Esophagus muscularis mucosa (tissue), 4 donors: ENCODE measurements at regions of chr21 and their contacts with region 1.

Region 1: GRCh38 chr21:42973991-42974831 is at the start of gene PKNOX1:
- DNase-seq: peak; percentile 99
- H3K4me3 ChIP-seq: peak within 1 kb of the TSS; percentile 65 to 99 (median 84)
- H3K27ac ChIP-seq: peak within 1 kb of the TSS; percentile 95 to 100 (median 98)
- H3K4me1 ChIP-seq: peaks cover 15 to 29% (median 22%) of the 10 kb centered on the region in 4 donors
- H3K27me3 ChIP-seq: no peaks in the 10 kb centered on the region
- CTCF ChIP-seq: peak in 1 of 3 experiments; percentile 15
- EP300 ChIP-seq: no peak
- POLR2A ChIP-seq: no peak
- total RNA-seq, gene PKNOX1: 10.3 to 18.7 (median 14.3) TPM

Region 2: GRCh38 chr21:41641821-41642701 is 1332.2 kb before region 1 on chr21:
- intact Hi-C with region 1: no loop called
- DNase-seq: no peak
- H3K4me3 ChIP-seq: no peak overlapping the region
- H3K27ac ChIP-seq: peak overlapping the region; percentile 55 to 77 (median 67)
- H3K4me1 ChIP-seq: peaks cover 0 to 16% (median 7%) of the 10 kb centered on the region in 4 donors
- H3K27me3 ChIP-seq: peaks cover 0 to 19% (median 0%) of the 10 kb centered on the region in 4 donors
- CTCF ChIP-seq: no peak
- EP300 ChIP-seq: no peak
- POLR2A ChIP-seq: no peak

Region 3: GRCh38 chr21:42878993-42879787 is 95.0 kb before region 1 on chr21 and contains the start of gene WDR4:
- intact Hi-C with region 1: no loop called
- DNase-seq: peak; percentile 99
- H3K4me3 ChIP-seq: peak within 1 kb of the TSS; percentile 73 to 98 (median 92)
- H3K27ac ChIP-seq: peak within 1 kb of the TSS; percentile 74 to 98 (median 88)
- H3K4me1 ChIP-seq: peaks cover 11 to 25% (median 22%) of the 10 kb centered on the region in 4 donors
- H3K27me3 ChIP-seq: no peaks in the 10 kb centered on the region
- CTCF ChIP-seq: peak in 1 of 3 experiments; percentile 23
- EP300 ChIP-seq: no peak
- POLR2A ChIP-seq: peak; percentile 13
- total RNA-seq, gene WDR4: 5.8 to 10.1 (median 7.0) TPM

Region 4: DNA sequence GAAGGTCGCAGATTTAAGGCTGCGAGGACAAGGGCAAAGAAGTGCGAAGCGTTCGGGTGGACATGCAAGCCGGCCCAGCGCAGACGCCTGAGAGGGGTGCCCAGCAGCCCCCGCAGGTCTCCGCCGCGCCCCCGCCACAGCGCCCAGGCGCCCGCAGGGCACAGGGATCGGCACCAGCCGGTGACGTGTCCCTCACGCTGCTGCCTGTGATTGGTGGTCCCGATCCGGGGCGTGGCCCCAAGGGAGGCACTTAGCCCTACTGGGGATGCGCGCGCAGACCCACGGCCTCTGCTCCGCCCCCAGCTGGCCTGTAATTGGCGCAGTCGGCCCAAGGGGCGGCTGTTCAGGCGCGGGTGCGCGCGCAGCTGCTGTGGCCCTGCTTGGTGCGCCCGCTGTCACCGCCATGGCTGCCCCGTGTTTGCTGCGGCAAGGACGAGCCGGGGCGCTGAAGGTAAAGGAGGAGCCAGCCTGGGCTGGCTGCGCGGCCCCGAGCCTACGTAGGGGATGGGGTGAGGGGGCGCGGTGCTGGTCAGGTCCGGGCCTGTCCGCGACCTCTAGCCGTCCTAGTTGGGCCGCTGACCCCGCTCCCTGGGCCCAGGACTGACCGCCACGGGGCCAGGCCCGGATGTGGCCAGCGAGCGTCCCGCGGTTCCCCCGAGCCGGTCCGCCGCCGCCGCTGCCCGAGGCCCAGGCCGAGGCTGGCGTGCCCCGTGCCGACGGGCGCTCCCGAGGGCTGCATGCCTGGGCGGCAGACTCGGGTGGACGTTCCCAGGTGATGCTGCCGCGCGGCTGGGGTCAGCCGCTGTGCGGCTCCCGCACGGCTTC is 81.1 kb before region 1 on chr21 and contains the start of gene NDUFV3:
- intact Hi-C with region 1: loop called (anchors 10 kb)
- DNase-seq: peak; percentile 100
- H3K4me3 ChIP-seq: peak within 1 kb of the TSS; percentile 72 to 93 (median 84)
- H3K27ac ChIP-seq: peak within 1 kb of the TSS; percentile 93 to 99 (median 96)
- H3K4me1 ChIP-seq: peaks cover 7 to 32% (median 20%) of the 10 kb centered on the region in 4 donors
- H3K27me3 ChIP-seq: no peaks in the 10 kb centered on the region
- CTCF ChIP-seq: no peak
- EP300 ChIP-seq: no peak
- POLR2A ChIP-seq: peak; percentile 94
- total RNA-seq, gene NDUFV3: 56.7 to 102 (median 74.1) TPM

Region 5: DNA sequence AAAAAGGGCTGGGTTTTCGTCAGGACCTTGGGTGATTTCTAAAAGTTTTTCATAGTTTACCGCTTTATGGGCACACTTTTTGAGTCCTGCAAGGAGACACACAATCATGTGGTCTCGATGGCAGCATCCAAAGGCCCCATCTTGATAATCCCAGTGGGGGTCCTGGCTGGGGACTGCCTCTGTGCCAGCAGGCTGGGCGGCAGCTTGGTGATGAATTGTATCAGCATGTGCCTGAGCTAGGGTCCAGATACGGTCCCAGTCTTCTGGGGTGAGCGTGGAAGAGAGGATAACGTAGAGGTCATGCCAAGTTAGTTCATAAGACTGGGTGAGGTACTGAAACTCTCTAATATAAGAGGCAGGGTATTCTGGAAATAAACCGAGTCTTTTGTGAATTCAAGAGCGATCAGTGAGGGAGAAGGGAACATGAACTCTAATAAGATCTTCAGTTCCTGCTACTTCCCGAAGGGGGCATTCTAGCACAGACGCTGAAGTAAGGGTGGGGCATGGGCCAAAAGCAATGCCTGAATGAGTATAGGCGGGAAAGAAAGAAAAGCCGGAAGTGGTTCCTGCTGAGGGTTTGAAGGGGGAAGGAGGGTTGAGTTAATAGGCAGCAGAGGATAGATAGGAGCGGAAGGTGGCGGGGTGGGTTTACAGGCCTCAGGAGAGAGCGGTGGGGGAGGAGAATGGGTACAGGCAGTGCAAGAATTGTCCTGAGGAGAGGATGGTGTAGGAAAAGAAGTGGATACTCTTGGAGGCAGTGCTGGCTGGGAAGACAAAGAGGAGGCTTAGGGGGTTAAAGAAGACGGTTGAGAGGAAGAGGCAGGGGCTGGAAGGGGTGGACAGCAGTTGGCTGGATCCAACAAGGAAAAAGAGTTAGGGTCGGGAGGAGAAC is 50.4 kb before region 1 on chr21:
- intact Hi-C with region 1: loop called (anchors 10 kb)
- DNase-seq: peak; percentile 94
- H3K4me3 ChIP-seq: peak overlapping the region in 3 of 4 donors; percentile 24 to 43 (median 31)
- H3K27ac ChIP-seq: no peak overlapping the region
- H3K4me1 ChIP-seq: peaks cover 4 to 14% (median 11%) of the 10 kb centered on the region in 4 donors
- H3K27me3 ChIP-seq: no peaks in the 10 kb centered on the region
- CTCF ChIP-seq: peak; percentile 73 to 90 (median 82)
- EP300 ChIP-seq: no peak
- POLR2A ChIP-seq: no peak